ENCODE measurements at regions of chr1 and their contacts with region 1.

Region 1: GRCh38 chr1:241847796-241848685 is at the start of gene EXO1:
- DNase-seq: peak; percentile 97
- H3K4me3 Mint-ChIP-seq: peak within 1 kb of the TSS; percentile 94
- H3K27ac Mint-ChIP-seq: peak within 1 kb of the TSS; percentile 99
- H3K4me1 Mint-ChIP-seq: peaks cover 28% of the 10 kb centered on the region
- H3K27me3 Mint-ChIP-seq: peaks cover 1% of the 10 kb centered on the region
- total RNA-seq, gene EXO1: 60.9 and 63.5 TPM in 2 replicates

Region 2: DNA sequence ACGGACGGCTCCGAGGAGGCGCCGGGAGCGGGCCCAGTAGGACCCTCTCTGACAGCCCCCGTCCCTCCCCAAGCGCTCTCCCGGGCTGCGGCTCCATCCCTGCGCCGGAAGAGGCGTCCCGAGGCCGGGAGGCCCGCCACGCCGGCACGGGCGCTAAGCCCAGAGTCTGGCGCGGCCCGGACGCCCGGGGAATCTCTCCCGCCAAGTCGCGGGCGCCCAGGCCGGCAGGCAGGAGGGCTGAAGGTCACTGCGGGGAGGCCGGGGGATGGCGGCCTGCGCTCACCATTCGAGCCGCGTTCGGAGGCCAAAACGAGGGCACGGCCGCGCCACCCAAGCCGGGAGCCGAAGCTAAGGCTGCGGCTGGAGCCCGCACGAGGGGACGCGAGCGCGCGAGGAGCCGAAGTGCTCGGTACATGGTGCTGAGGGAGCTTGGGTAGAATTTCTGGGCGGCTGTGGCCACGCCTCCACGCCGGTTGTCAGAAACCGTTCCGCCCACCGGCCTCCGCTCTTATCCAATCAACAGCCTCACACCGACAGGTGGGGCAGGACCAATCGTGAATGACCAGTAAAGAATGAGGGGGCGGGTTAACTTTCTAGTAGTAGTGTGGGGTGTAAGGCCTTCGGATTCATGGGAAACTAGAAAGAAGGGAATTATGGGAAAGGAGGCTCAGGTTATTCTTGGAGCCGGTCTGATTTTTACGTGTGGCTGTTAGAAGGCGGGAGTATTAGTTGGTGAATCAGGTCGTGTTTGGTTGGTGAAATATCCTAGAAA is 328.5 kb before region 1 on chr1 and contains the start of gene FH:
- intact Hi-C with region 1: loop called (anchors 1 kb)
- DNase-seq: peak; percentile 98
- H3K4me3 Mint-ChIP-seq: no peak within 1 kb of the TSS
- H3K27ac Mint-ChIP-seq: peak within 1 kb of the TSS; percentile 87
- H3K4me1 Mint-ChIP-seq: peaks cover 23% of the 10 kb centered on the region
- H3K27me3 Mint-ChIP-seq: peaks cover 27% of the 10 kb centered on the region
- total RNA-seq, gene FH: 98.6 and 103 TPM in 2 replicates

Region 3: GRCh38 chr1:241640029-241640818 is 207.8 kb before region 1 on chr1 and contains the starts of genes CHML and OPN3:
- intact Hi-C with region 1: loop called (anchors 1 kb)
- DNase-seq: peak; percentile 98
- H3K4me3 Mint-ChIP-seq: peak within 1 kb of the TSS; percentile 97
- H3K27ac Mint-ChIP-seq: peak within 1 kb of the TSS; percentile 92
- H3K4me1 Mint-ChIP-seq: peaks cover 31% of the 10 kb centered on the region
- H3K27me3 Mint-ChIP-seq: no peaks in the 10 kb centered on the region
- total RNA-seq, gene CHML: 19.5 and 21.4 TPM in 2 replicates
- total RNA-seq, gene OPN3: 11.2 and 11.6 TPM in 2 replicates

Region 4: DNA sequence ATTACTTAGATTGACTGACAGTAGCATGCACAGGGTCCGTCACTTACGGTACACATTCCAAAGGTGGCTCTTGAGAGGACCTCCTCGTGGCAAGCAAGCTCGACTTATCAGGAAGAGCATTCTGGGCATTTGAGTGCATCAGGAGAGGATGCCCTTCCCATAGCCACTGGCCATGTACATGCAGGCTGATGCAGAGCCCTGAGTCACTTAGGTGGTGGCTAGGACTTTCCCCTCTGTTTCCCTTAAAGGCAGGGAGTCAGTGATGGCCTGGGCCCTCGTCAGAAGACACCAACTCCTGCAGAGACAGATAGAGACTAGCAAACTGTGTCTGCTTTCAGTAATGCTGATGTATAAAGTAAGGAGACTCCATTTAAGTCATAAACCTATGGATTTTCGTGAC is 12.9 kb after region 1 on chr1:
- intact Hi-C with region 1: no loop called
- DNase-seq: no peak
- H3K4me3 Mint-ChIP-seq: no peak overlapping the region
- H3K27ac Mint-ChIP-seq: no peak overlapping the region
- H3K4me1 Mint-ChIP-seq: peaks cover 8% of the 10 kb centered on the region
- H3K27me3 Mint-ChIP-seq: no peaks in the 10 kb centered on the region

Region 5: GRCh38 chr1:241924080-241924808 is 76.2 kb after region 1 on chr1:
- intact Hi-C with region 1: no loop called
- DNase-seq: no peak
- H3K4me3 Mint-ChIP-seq: no peak overlapping the region
- H3K27ac Mint-ChIP-seq: no peak overlapping the region
- H3K4me1 Mint-ChIP-seq: no peaks in the 10 kb centered on the region
- H3K27me3 Mint-ChIP-seq: no peaks in the 10 kb centered on the region

Region 6: DNA sequence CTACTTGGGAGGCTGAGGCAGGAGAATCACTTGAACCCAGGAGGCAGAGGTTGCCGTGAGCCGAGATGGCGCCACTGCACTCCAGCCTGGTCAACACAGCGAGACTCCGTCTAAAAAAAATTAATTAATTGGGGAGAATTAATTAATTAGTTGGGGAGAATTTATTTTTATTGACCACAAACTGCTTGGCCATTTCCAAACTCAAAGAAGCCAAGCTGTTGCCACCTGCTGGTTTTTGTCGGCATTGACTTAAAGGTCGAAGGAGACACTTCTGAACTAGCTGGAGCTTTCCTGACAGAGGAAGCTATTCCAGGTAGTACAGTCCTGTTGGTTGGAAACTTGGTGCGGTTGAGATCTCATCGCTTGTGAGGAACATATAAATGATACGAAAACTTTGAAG is 137.7 kb after region 1 on chr1:
- intact Hi-C with region 1: no loop called
- DNase-seq: peak; percentile 61
- H3K4me3 Mint-ChIP-seq: no peak overlapping the region
- H3K27ac Mint-ChIP-seq: no peak overlapping the region
- H3K4me1 Mint-ChIP-seq: no peaks in the 10 kb centered on the region
- H3K27me3 Mint-ChIP-seq: no peaks in the 10 kb centered on the region

Region 7: GRCh38 chr1:241998412-241998921 is 150.4 kb after region 1 on chr1:
- intact Hi-C with region 1: loop called (anchors 1 kb)
- DNase-seq: peak; percentile 84
- H3K4me3 Mint-ChIP-seq: peak overlapping the region; percentile 70
- H3K27ac Mint-ChIP-seq: no peak overlapping the region
- H3K4me1 Mint-ChIP-seq: peaks cover 6% of the 10 kb centered on the region
- H3K27me3 Mint-ChIP-seq: no peaks in the 10 kb centered on the region